MCF 10A (cell line): ENCODE measurements at regions of chr22 and their contacts with region 1.

Region 1: GRCh38 chr22:49930739-49931412 is 12.4 kb downstream of the CRELD2 start:
- DNase-seq: peak; percentile 83
- H3K4me3 Mint-ChIP-seq: no peak overlapping the region
- H3K27ac Mint-ChIP-seq: no peak overlapping the region
- H3K4me1 Mint-ChIP-seq: peaks cover 12% of the 10 kb centered on the region
- H3K27me3 Mint-ChIP-seq: no peaks in the 10 kb centered on the region
- CTCF ChIP-seq: peak; percentile 13

Region 2: DNA sequence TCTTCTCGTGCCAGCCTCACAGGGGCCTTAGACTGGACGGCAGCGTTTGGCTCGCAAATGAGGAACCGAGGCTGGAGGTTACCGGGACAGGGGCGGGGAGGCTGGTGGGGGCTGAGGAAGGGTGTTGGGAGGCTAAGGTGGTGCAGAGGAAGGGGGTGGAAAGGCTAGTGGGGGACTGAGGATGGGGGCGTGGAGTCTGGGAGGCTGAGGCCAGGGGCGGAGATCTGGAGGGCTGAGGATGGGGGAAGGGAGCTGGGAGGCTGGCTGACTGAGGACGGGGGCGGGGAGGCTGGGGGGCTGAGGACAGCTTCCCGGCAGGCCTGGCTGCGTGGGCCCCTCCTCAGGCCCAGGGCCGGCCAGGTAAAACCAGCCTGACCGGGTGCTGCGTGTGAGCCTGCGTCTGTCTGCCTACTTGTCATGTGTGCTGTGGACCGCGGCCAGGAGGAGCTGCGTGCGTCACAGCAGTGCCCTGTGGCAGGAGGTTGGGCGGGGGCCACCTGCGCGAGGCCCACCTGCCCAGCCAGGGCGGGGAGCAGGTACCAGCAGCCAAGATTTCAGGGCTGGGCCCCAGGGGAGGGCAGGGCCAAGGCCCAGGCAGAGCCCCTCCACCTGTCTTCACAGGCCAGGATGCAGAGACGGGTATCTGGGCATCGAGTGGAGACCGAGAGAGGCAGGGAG is 20.3 kb after region 1 on chr22:
- CTCF ChIA-PET with region 1: interaction called, 16 read pairs
- POLR2A ChIA-PET with region 1: interaction called, 16 read pairs
- intact Hi-C with region 1: no loop called
- DNase-seq: peak; percentile 90
- H3K4me3 Mint-ChIP-seq: peak overlapping the region; percentile 29
- H3K27ac Mint-ChIP-seq: peak overlapping the region; percentile 88
- H3K4me1 Mint-ChIP-seq: peaks cover 24% of the 10 kb centered on the region
- H3K27me3 Mint-ChIP-seq: no peaks in the 10 kb centered on the region
- CTCF ChIP-seq: no peak

Region 3: DNA sequence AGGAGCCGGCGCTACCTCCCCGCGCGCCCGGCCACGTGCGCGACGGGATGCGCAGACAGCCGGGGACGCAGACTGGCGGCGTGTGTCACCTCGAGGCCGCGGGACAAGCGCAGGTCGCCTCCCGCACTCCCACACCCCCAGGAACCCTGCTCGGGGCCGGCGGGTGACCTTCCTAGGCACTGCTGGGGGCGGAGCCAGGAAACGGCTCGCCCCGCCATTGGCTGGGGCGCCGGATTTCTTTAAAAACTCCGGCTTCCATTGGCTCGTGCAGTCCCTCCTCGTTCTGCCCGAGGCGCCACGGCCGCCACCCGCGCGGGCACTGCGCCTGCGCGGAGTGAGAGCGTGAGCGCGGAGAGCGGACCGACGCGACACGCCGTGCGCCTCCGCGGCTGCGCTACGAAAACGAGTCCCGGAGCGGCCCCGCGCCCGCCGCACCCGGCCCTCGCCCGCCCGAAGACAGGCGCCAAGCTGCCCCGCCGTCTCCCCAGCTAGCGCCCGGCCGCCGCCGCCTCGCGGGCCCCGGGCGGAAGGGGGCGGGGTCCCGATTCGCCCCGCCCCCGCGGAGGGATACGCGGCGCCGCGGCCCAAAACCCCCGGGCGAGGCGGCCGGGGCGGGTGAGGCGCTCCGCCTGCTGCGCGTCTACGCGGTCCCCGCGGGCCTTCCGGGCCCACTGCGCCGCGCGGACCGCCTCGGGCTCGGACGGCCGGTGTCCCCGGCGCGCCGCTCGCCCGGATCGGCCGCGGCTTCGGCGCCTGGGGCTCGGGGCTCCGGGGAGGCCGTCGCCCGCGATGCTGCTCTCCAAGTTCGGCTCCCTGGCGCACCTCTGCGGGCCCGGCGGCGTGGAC is 29.5 kb after region 1 on chr22 and contains the start of gene PIM3:
- CTCF ChIA-PET with region 1: interaction called, 12 read pairs
- POLR2A ChIA-PET with region 1: interaction called, 65 read pairs
- intact Hi-C with region 1: loop called (anchors 1 kb)
- DNase-seq: peak; percentile 96
- H3K4me3 Mint-ChIP-seq: peak within 1 kb of the TSS; percentile 90
- H3K27ac Mint-ChIP-seq: peak within 1 kb of the TSS; percentile 77
- H3K4me1 Mint-ChIP-seq: peaks cover 19% of the 10 kb centered on the region
- H3K27me3 Mint-ChIP-seq: no peaks in the 10 kb centered on the region
- CTCF ChIP-seq: no peak
- total RNA-seq, gene PIM3: 56.3 and 73.5 TPM in 2 replicates

Region 4: GRCh38 chr22:49970528-49971231 is 39.8 kb after region 1 on chr22:
- CTCF ChIA-PET with region 1: interaction called, 12 read pairs
- POLR2A ChIA-PET with region 1: interaction called, 5 read pairs
- intact Hi-C with region 1: no loop called
- DNase-seq: peak; percentile 98
- H3K4me3 Mint-ChIP-seq: peak overlapping the region; percentile 69
- H3K27ac Mint-ChIP-seq: peak overlapping the region; percentile 72
- H3K4me1 Mint-ChIP-seq: peaks cover 15% of the 10 kb centered on the region
- H3K27me3 Mint-ChIP-seq: no peaks in the 10 kb centered on the region
- CTCF ChIP-seq: no peak

Region 5: GRCh38 chr22:49992921-49993648 is 62.2 kb after region 1 on chr22:
- CTCF ChIA-PET with region 1: interaction called, 12 read pairs
- POLR2A ChIA-PET with region 1: no interaction called
- intact Hi-C with region 1: loop called (anchors 1 kb)
- DNase-seq: peak; percentile 65
- H3K4me3 Mint-ChIP-seq: no peak overlapping the region
- H3K27ac Mint-ChIP-seq: no peak overlapping the region
- H3K4me1 Mint-ChIP-seq: peaks cover 14% of the 10 kb centered on the region
- H3K27me3 Mint-ChIP-seq: peaks cover 14% of the 10 kb centered on the region
- CTCF ChIP-seq: peak; percentile 77